Activated naive CD4-positive, alpha-beta T cell treated with anti-CD3 and anti-CD28 coated beads, Interleukin-2, amount 10 ng/mL, durations not matched to agents 7 days and 5 days (primary cell): ENCODE measurements at regions of chr14 and their contacts with region 1.

Region 1: DNA sequence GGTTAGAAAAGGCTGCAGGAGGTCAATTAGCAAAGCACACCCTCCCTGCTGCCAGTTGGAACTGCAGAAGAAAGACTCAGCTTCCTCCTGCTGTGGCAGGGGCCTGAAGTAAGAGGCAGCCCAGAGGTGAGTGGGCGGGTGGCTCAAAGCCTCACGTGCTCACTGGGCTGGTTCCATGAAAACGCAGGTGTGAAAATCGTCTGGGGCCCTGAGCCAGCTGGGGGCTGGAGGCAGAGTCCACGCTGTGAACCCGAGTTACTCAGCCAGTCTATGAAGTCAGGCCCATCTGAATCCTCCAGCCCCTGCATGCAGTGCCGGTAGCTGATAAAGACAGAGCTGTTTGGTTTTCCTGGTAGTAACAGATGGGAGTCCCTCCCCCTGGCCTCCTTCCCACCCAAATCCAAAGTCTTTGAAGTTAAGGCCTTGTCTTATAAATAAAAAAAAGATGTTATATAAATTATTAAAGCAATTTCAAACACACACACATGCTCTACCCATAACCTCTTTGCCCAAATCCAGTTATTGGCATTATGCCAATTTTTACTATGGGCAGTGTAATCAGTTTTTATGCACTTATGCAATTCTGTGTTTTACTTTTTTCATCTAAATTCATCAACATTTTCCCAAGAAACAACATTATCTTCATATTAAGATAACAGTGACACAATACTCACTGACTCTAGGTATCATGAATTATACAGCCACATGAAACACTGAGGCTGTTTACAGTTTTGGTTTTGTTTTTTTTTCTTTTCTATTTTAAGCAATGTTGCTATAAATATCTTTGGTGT is 57.9 kb upstream of the PNMA1 start:
- DNase-seq: peak; percentile 79
- H3K4me3 Mint-ChIP-seq: peak overlapping the region; percentile 49
- H3K27ac Mint-ChIP-seq: peak overlapping the region; percentile 91
- H3K4me1 Mint-ChIP-seq: peaks cover 73% of the 10 kb centered on the region
- H3K27me3 Mint-ChIP-seq: no peaks in the 10 kb centered on the region

Region 2: GRCh38 chr14:73785873-73786695 is 14.0 kb after region 1 on chr14:
- CTCF ChIA-PET with region 1: interaction called, 14 read pairs
- DNase-seq: peak; percentile 83
- H3K4me3 Mint-ChIP-seq: peak overlapping the region; percentile 91
- H3K27ac Mint-ChIP-seq: peak overlapping the region; percentile 96
- H3K4me1 Mint-ChIP-seq: peaks cover 61% of the 10 kb centered on the region
- H3K27me3 Mint-ChIP-seq: no peaks in the 10 kb centered on the region